Right ventricle myocardium inferior (tissue), 1 donor: ENCODE measurements at regions of chr22 and their contacts with region 1.

Region 1: DNA sequence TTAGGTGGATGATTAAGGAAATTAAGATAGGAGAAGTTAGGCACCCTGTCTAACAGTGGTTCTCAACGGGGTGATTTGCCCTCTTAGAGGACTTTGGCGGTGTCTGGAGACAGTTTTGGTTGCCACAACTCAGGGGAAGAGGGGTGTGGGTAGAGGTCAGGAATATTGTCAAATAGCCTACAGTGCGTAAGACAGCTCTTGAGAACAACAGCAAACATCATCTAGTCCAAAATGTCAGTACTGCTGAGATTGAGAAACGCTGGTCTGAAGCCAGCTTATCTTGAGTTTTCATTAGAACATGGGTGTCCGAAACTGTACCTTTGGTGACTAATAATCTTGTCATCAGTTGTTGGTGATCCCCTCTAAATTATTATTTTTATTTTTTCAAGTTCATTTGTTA is 38.4 kb downstream of the CECR2 start:
- DNase-seq: no peak
- ATAC-seq: peak; percentile 72

Region 2: GRCh38 chr22:17368554-17369438 is 38.8 kb before region 1 on chr22:
- intact Hi-C with region 1: loop called (anchors 5 kb)
- DNase-seq: peak; percentile 77
- ATAC-seq: peak; percentile 78